ENCODE measurements at regions of chr10 and their contacts with region 1.

Region 1: DNA sequence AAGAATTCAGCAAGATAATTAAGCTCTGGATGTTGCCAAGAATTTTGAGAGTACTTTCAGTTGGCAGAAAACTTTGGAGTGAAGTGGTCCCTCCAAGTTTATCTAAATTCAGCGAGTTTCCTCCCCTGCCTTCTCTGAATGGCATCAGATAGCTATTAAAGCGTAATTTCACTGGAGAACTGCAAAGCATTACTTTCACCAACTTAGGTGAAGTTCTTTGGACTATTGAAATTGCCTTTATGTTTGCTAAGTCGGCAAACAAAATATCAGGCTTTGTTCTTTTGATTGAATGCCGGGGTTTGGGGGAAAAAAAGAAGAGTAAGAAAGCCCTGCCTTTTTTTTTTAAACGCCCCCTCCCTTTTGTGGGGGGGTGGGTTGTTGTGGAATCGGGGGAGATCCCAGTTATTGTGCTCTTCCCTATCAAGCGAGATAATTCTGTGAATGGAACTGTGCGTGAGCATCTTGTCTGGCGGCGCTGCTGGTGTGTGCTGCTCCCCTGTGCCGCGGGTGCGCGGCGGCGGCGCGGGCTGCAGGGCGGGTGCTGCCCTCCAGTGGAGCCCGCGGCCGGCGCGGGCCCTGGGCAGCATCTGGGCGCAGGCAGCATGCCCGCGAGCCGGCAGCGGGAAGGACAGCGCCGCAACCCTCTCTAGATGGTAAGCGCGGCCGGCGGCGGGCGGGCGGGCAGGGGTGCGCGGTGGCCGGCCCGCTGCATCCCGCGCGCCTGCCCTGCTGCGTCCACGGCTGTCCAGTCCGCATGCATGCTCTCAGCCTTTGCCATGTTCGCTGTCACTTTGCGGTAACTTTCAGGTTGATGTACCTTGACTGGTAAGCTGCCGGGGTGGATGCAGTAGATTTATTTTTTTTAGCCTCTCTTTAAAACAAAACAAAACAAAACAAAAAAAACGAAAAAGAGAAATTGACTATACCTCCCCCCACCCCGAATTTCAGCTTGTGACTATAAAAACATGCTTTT is 176.5 kb downstream of the TCF7L2 start:
- DNase-seq: peak; percentile 22
- ATAC-seq: peak; percentile 71
- H3K4me3 Mint-ChIP-seq: peak overlapping the region; percentile 25
- H3K27ac Mint-ChIP-seq: no peak overlapping the region
- H3K4me1 Mint-ChIP-seq: peaks cover 3% of the 10 kb centered on the region
- H3K27me3 Mint-ChIP-seq: peaks cover 42% of the 10 kb centered on the region
- CTCF ChIP-seq: no peak

Region 2: DNA sequence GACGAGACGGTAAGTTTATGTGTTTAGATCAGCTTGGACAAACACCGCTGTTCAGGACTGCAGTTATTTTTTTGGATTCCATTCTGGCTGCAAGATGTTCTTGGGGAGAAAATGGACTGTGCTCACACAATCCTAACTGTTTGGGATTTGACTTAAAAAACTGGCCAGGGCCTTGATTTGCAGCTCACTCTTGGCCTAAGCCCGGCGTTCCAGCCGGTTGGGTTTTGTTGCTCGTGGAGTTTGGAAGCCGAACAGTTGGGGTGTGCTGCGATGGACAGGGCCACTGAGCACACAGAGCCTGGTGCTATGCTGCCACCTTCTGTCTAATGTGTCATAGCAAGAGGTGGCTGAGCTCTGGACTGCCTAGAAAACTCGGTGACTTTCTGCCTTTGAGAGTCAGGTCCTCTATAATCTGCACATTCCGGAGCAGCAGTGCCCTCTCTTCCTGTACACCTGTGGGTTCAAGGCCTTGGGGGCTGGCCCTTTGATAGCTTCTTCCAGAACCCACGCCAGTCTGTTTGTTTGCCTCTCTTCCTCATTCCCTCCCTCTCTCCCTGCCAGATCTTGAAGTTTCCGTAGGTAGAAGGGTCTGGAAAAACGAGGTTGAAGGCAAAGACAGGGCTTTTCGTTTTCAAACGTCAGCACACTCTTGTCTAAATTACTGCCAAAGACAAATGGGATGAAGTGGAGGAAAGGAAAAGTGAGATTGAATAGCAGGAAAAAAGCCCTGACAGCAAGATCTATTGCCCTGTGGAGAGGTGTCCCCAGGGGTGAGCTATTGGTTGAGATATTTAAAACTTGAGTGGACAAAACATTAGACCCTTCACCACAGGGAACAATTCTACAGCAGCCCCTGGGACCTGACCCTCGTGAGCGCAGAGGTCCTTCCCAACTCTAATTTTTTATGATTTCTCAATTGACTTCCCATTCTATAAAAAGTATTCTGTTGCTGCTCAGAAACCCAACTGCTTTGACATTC is 258.8 kb after region 1 on chr10:
- CTCF ChIA-PET with region 1: interaction called, 3 read pairs
- POLR2A ChIA-PET with region 1: no interaction called
- intact Hi-C with region 1: loop called (anchors 2 kb)
- DNase-seq: no peak
- ATAC-seq: peak; percentile 77
- H3K4me3 Mint-ChIP-seq: no peak overlapping the region
- H3K27ac Mint-ChIP-seq: no peak overlapping the region
- H3K4me1 Mint-ChIP-seq: peaks cover 15% of the 10 kb centered on the region
- H3K27me3 Mint-ChIP-seq: peaks cover 22% of the 10 kb centered on the region
- CTCF ChIP-seq: no peak

Measured in activated B cell treated with CpG ODN at 0.5 μM for 24 hours (primary cell).